T-cell (primary cell): ENCODE measurements at regions of chr1 and their contacts with region 1.

Region 1: DNA sequence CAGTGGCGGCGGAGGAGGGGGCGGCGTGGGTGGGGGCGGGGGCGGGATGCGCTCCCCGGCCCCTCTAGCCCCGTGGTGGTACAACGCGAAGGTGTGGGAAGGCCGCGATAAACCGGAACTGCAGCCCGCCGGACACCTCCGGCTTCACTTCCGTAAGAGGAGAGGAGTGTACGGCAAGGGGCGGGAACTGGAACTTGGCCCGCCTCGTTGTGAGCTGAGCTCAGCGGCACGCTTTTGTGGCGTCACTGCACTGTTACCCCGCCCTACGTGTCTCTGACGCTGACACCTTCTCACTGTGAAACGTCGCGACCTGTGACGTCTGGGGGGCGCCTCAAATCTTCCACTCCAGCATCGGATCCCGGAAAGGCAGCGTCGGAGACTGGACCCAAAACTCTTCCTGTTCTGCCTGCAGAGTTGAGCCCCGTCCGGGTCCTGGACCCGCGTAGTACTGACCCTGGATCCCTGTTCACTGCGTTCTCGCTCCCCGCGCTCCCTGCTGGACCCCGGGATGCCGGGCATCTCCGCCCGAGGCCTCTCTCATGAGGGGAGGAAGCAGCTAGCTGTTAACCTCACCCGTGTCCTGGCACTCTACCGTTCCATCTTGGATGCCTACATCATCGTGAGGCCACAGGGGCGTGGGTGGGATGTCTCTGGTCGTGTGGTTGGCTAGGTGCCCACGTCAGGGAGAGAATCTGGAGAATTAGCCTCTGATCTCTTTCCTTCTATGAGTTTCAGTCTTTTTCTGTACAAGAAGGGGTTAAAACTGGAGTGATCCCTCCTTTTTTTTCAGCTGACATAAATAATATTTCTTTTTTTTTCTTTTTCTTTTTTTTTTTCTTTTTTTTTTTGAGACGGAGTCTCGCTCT is at the start of gene ISG20L2:
- DNase-seq: peak; percentile 63 to 99 (median 95)
- ATAC-seq: peak; percentile 91 to 94 (median 92)
- H3K4me3 ChIP-seq: peak within 1 kb of the TSS; percentile 91 to 97
- H3K4me3 Mint-ChIP-seq: no peak within 1 kb of the TSS
- H3K27ac ChIP-seq: peak within 1 kb of the TSS; percentile 100
- H3K27ac Mint-ChIP-seq: peak within 1 kb of the TSS; percentile 86 to 94
- H3K4me1 ChIP-seq: peaks cover 26 to 49% of the 10 kb centered on the region in 2 experiments
- H3K4me1 Mint-ChIP-seq: peaks cover 17 to 25% (median 23%) of the 10 kb centered on the region in 3 donors
- H3K27me3 ChIP-seq: no peaks in the 10 kb centered on the region
- H3K27me3 Mint-ChIP-seq: no peaks in the 10 kb centered on the region
- total RNA-seq, gene ISG20L2: 35.3 to 63.7 (median 44.3) TPM

Region 2: GRCh38 chr1:156627313-156627880 is 101.4 kb before region 1 on chr1:
- CTCF ChIA-PET with region 1: interaction called in 1 of 2 experiments, 10 read pairs
- POLR2A ChIA-PET with region 1: no interaction called
- DNase-seq: peak in 6 of 35 experiments; percentile 14 to 64 (median 27)
- ATAC-seq: peak in 1 of 4 experiments; percentile 40
- H3K4me3 ChIP-seq: no peak overlapping the region
- H3K4me3 Mint-ChIP-seq: no peak overlapping the region
- H3K27ac ChIP-seq: no peak overlapping the region
- H3K27ac Mint-ChIP-seq: no peak overlapping the region
- H3K4me1 ChIP-seq: peaks cover 0 to 24% of the 10 kb centered on the region in 2 experiments
- H3K4me1 Mint-ChIP-seq: peaks cover 13 to 17% (median 14%) of the 10 kb centered on the region in 3 donors
- H3K27me3 ChIP-seq: peaks cover 13 to 63% of the 10 kb centered on the region in 2 experiments
- H3K27me3 Mint-ChIP-seq: peaks cover 44 to 60% of the 10 kb centered on the region in 2 donors

Region 3: DNA sequence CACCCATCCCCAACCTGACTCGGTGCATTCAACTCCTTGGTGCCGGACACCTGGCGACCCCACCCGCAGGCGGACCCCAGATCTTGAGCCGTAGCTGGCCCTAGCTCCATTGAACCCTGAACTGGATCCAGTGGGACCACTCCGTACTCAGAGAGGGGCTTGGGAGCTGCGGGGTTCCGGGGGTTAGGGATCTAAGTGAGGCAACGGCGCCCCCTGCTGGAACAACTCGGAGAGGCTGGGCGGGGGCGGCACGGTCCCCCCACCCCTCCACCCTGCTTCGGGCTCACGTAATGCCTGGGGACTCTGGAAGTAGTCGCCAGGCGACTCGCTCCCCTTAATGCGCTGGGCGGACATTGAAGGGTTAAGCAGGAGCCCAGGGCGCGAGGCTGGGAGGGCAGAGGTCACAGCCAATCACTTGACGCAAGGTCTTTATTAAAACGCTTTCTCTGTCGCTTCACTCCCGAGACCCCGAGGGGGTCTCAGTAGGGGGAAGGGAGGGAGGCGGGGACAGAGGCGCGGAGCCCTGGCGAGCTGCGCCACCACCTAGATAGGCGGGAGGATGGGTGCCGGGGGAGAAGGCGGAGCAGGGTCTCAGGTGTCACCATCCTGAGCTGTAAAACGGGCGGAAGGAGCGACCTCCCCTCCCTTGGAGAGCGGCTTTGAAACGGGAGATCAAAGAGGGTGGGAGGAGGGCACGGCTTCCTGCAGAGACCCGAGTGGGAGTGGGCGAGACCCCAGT is 22.7 kb before region 1 on chr1:
- CTCF ChIA-PET with region 1: interaction called, 3 to 22 read pairs
- POLR2A ChIA-PET with region 1: interaction called in 1 of 2 experiments, 6 read pairs
- DNase-seq: peak; percentile 19 to 85 (median 59)
- ATAC-seq: peak; percentile 70 to 76 (median 73)
- H3K4me3 ChIP-seq: peak overlapping the region; percentile 55 to 61
- H3K4me3 Mint-ChIP-seq: peak overlapping the region; percentile 83 to 91 (median 86)
- H3K27ac ChIP-seq: peak overlapping the region; percentile 47
- H3K27ac Mint-ChIP-seq: peak overlapping the region; percentile 76 to 83
- H3K4me1 ChIP-seq: peaks cover 14 to 38% of the 10 kb centered on the region in 2 experiments
- H3K4me1 Mint-ChIP-seq: peaks cover 18 to 32% (median 30%) of the 10 kb centered on the region in 3 donors
- H3K27me3 ChIP-seq: peaks cover 7 to 47% of the 10 kb centered on the region in 2 experiments
- H3K27me3 Mint-ChIP-seq: peaks cover 7 to 29% of the 10 kb centered on the region in 2 donors

Region 4: GRCh38 chr1:156751758-156752757 is 23.2 kb after region 1 on chr1:
- CTCF ChIA-PET with region 1: interaction called in 1 of 2 experiments, 40 read pairs
- POLR2A ChIA-PET with region 1: interaction called, 6 to 17 read pairs
- DNase-seq: peak; percentile 88 to 97 (median 95)
- ATAC-seq: peak; percentile 86 to 91 (median 88)
- H3K4me3 ChIP-seq: peak overlapping the region; percentile 92 to 94
- H3K4me3 Mint-ChIP-seq: peak overlapping the region; percentile 91 to 92 (median 92)
- H3K27ac ChIP-seq: peak overlapping the region; percentile 78
- H3K27ac Mint-ChIP-seq: peak overlapping the region; percentile 91 to 92
- H3K4me1 ChIP-seq: peaks cover 36 to 48% of the 10 kb centered on the region in 2 experiments
- H3K4me1 Mint-ChIP-seq: peaks cover 49 to 60% (median 56%) of the 10 kb centered on the region in 3 donors
- H3K27me3 ChIP-seq: no peaks in the 10 kb centered on the region
- H3K27me3 Mint-ChIP-seq: no peaks in the 10 kb centered on the region

Region 5: GRCh38 chr1:156860113-156860627 is 131.3 kb after region 1 on chr1:
- CTCF ChIA-PET with region 1: interaction called in 1 of 2 experiments, 29 read pairs
- POLR2A ChIA-PET with region 1: no interaction called
- DNase-seq: peak in 31 of 35 experiments; percentile 17 to 73 (median 37)
- ATAC-seq: peak; percentile 69 to 74 (median 70)
- H3K4me3 ChIP-seq: peak overlapping the region; percentile 38 to 71
- H3K4me3 Mint-ChIP-seq: peak overlapping the region; percentile 69 to 90 (median 75)
- H3K27ac ChIP-seq: no peak overlapping the region
- H3K27ac Mint-ChIP-seq: no peak overlapping the region
- H3K4me1 ChIP-seq: peaks cover 5 to 30% of the 10 kb centered on the region in 2 experiments
- H3K4me1 Mint-ChIP-seq: peaks cover 18 to 32% (median 30%) of the 10 kb centered on the region in 3 donors
- H3K27me3 ChIP-seq: peaks cover 13 to 86% of the 10 kb centered on the region in 2 experiments
- H3K27me3 Mint-ChIP-seq: peaks cover 50 to 70% of the 10 kb centered on the region in 2 donors

Region 6: GRCh38 chr1:156920233-156921052 is 191.6 kb after region 1 on chr1 and contains the start of gene LRRC71:
- CTCF ChIA-PET with region 1: no interaction called
- POLR2A ChIA-PET with region 1: no interaction called
- DNase-seq: peak in 33 of 35 experiments; percentile 10 to 71 (median 43)
- ATAC-seq: peak; percentile 65 to 91 (median 74)
- H3K4me3 ChIP-seq: no peak within 1 kb of the TSS
- H3K4me3 Mint-ChIP-seq: peak within 1 kb of the TSS in 1 of 3 donors; percentile 26
- H3K27ac ChIP-seq: no peak within 1 kb of the TSS
- H3K27ac Mint-ChIP-seq: peak within 1 kb of the TSS in 1 of 2 donors; percentile 2
- H3K4me1 ChIP-seq: peaks cover 0 to 21% of the 10 kb centered on the region in 2 experiments
- H3K4me1 Mint-ChIP-seq: peaks cover 11 to 16% (median 15%) of the 10 kb centered on the region in 3 donors
- H3K27me3 ChIP-seq: peaks cover 16 to 75% of the 10 kb centered on the region in 2 experiments
- H3K27me3 Mint-ChIP-seq: peaks cover 64 to 84% of the 10 kb centered on the region in 2 donors
- total RNA-seq, gene LRRC71: not detected